Activated CD4-positive, alpha-beta memory T cell treated with anti-CD3 and anti-CD28 coated beads, Interleukin-2, amount 10 ng/mL, durations not matched to agents 7 days and 5 days (primary cell): ENCODE measurements at regions of chr5 and their contacts with region 1.

Region 1: GRCh38 chr5:10627160-10627701 is 63.4 kb downstream of the ANKRD33B start:
- DNase-seq: no peak
- H3K4me3 Mint-ChIP-seq: peak overlapping the region; percentile 64
- H3K27ac Mint-ChIP-seq: peak overlapping the region; percentile 79
- H3K4me1 Mint-ChIP-seq: peaks cover 51% of the 10 kb centered on the region
- H3K27me3 Mint-ChIP-seq: no peaks in the 10 kb centered on the region

Region 2: DNA sequence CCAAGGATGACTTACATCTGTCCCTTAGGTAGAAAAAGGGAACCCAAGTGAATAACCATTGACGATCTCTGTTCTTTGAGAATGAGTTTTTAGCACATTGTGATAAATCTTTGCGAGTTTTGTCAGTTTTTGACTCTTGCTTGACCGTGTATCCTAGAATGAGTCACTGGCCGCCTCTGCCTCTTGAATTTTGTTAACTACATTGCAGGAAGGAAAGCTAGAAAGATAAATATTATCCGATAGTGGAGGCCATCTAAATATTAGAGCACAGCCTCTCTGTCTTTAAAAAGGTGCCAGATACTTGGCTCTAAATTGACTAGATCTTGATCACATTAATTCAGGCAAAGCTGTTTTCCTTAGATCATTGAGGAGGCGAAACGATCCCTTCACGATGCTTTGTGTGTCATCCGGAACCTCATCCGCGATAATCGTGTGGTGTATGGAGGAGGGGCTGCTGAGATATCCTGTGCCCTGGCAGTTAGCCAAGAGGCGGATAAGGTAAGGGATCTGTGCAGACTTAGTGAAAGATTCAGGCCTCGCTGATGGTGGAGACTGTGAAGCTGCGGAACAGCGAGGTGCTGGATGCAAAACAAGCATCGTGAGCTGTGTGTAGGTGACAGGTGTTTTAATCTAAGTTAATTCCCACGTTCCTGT is 365.0 kb before region 1 on chr5:
- CTCF ChIA-PET with region 1: no interaction called
- POLR2A ChIA-PET with region 1: no interaction called
- DNase-seq: no peak
- H3K4me3 Mint-ChIP-seq: no peak overlapping the region
- H3K27ac Mint-ChIP-seq: no peak overlapping the region
- H3K4me1 Mint-ChIP-seq: peaks cover 16% of the 10 kb centered on the region
- H3K27me3 Mint-ChIP-seq: no peaks in the 10 kb centered on the region

Region 3: GRCh38 chr5:10283927-10284635 is 343.1 kb before region 1 on chr5:
- CTCF ChIA-PET with region 1: interaction called, 21 read pairs
- POLR2A ChIA-PET with region 1: interaction called, 3 read pairs
- DNase-seq: peak; percentile 84
- H3K4me3 Mint-ChIP-seq: peak overlapping the region; percentile 32
- H3K27ac Mint-ChIP-seq: peak overlapping the region; percentile 48
- H3K4me1 Mint-ChIP-seq: peaks cover 15% of the 10 kb centered on the region
- H3K27me3 Mint-ChIP-seq: no peaks in the 10 kb centered on the region

Region 4: GRCh38 chr5:10452768-10453331 is 174.4 kb before region 1 on chr5:
- CTCF ChIA-PET with region 1: interaction called, 118 read pairs
- POLR2A ChIA-PET with region 1: interaction called, 6 read pairs
- DNase-seq: peak; percentile 26
- H3K4me3 Mint-ChIP-seq: no peak overlapping the region
- H3K27ac Mint-ChIP-seq: no peak overlapping the region
- H3K4me1 Mint-ChIP-seq: peaks cover 22% of the 10 kb centered on the region
- H3K27me3 Mint-ChIP-seq: no peaks in the 10 kb centered on the region

Region 5: DNA sequence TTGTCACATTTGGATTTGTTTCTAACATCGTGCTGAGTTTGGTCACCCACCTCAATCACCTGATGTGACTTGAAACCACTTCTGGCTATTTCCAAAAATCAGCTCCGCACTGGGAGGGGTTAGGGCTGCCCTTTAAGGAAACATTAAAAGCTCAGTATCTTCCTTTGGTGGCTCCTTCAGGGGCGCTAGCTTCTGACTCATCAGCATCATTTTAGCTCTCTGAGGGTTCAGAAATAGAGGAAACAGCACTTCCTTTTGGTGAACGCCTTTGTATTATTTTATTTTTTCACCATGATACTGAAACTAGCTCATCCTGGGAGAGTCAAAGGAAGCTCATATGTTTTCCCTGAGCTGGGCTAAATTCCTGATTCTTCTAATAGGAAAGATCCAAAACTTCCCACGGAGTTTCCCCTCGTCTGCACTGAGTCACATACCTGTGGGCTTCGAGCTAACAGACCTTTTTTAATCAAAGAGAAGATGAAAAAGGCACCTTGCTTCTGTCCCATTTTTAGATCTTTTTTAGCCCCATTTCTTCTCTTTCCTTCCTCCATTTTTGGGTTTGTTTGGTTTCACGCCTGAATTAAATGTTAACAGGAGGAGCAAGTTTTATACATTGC is 137.3 kb before region 1 on chr5:
- CTCF ChIA-PET with region 1: interaction called, 28 read pairs
- POLR2A ChIA-PET with region 1: interaction called, 3 read pairs
- DNase-seq: peak; percentile 52
- H3K4me3 Mint-ChIP-seq: peak overlapping the region; percentile 17
- H3K27ac Mint-ChIP-seq: peak overlapping the region; percentile 80
- H3K4me1 Mint-ChIP-seq: peaks cover 57% of the 10 kb centered on the region
- H3K27me3 Mint-ChIP-seq: no peaks in the 10 kb centered on the region

Region 6: DNA sequence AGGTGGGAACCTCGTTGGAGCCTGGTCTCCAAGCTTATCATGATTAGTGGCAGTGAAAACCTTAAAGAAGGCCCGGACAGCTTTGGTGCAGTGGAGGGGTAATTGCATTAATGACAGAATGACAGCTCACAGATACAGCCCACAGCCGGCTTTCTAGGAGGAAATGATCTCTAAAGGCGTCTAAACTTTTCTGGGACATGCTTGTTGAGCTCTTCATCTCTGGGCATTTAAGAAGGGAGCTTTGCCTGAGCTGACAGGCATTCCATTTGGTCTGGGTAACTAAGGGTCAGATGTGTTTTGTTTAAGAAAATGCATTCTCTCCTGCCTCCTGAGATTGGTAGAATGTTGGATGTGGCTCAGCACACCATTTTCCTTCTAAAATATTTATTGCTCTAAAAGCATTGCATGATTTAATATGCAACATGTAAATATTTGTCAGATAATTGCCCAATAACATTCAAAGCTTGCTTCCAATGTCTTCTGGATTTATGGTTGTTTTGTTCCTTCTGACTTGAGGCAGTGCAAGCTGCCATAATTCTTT is 59.4 kb before region 1 on chr5:
- CTCF ChIA-PET with region 1: interaction called, 13 read pairs
- POLR2A ChIA-PET with region 1: interaction called, 7 read pairs
- DNase-seq: no peak
- H3K4me3 Mint-ChIP-seq: no peak overlapping the region
- H3K27ac Mint-ChIP-seq: no peak overlapping the region
- H3K4me1 Mint-ChIP-seq: peaks cover 33% of the 10 kb centered on the region
- H3K27me3 Mint-ChIP-seq: no peaks in the 10 kb centered on the region

Region 7: GRCh38 chr5:10607666-10608073 is 19.6 kb before region 1 on chr5:
- CTCF ChIA-PET with region 1: interaction called, 23 read pairs
- POLR2A ChIA-PET with region 1: no interaction called
- DNase-seq: no peak
- H3K4me3 Mint-ChIP-seq: no peak overlapping the region
- H3K27ac Mint-ChIP-seq: no peak overlapping the region
- H3K4me1 Mint-ChIP-seq: peaks cover 18% of the 10 kb centered on the region
- H3K27me3 Mint-ChIP-seq: no peaks in the 10 kb centered on the region

Region 8: GRCh38 chr5:11212706-11213105 is 585.5 kb after region 1 on chr5:
- CTCF ChIA-PET with region 1: no interaction called
- POLR2A ChIA-PET with region 1: no interaction called
- DNase-seq: no peak
- H3K4me3 Mint-ChIP-seq: no peak overlapping the region
- H3K27ac Mint-ChIP-seq: no peak overlapping the region
- H3K4me1 Mint-ChIP-seq: no peaks in the 10 kb centered on the region
- H3K27me3 Mint-ChIP-seq: no peaks in the 10 kb centered on the region